AG04449 (cell line): ENCODE measurements at regions of chr21 and their contacts with region 1.

Region 1: DNA sequence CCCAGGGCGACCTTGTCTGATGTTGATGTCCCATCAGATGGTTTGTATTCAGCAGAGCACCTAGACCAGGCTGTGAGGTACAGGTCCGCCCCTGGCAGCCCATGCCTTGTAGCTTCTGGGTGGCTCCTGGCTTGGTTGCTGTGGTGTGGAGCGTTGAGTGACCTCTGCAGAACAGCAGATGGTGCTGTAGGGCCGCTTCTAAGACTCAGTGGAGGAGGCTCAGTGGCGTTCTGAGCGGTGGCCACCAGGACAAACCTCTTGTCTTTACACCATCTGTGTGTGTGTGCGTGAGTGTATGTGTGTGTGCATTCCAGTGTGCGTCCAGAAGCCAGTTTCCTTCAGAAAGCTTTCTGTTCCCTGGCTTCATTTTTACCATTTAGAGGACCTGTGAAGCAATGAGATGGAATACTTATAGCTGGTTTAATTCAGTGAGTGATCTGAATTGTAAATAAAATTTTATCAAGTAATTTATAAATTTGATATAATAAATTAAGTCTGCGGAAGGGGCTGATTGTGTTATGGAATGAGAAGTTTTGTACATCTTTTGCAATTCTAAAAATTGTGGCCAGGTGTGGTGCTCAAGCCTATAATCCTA is 66.1 kb downstream of the ADARB1 start:
- DNase-seq: peak; percentile 78
- H3K4me3 ChIP-seq: no peak overlapping the region
- CTCF ChIP-seq: peak; percentile 98

Region 2: DNA sequence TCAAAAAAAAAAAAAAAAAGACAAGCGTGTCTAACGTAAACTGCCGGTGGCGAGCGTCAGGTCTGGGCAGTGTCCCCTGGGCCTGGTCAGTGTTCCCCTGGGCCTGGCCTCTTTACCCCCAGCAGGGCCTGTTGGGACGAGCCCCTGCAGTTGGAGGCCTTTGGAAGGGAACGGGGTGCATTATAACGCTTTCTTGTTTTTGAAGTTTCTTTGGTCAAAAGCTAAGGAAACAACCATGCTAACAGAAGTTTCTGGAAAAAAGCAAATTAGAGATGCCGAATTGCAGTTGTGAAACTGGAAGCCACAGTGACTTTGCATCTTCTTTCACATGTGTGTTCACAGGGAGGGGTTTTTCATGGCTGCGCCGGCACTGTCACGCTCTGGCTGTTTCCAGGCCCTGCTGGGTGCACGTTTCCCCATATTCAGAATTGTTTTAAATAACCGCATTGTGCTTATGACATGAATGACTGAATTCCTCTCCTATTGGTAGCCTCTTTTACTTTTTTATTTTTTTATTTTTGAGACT is 1335.1 kb before region 1 on chr21:
- CTCF ChIA-PET with region 1: no interaction called
- POLR2A ChIA-PET with region 1: no interaction called
- DNase-seq: no peak
- H3K4me3 ChIP-seq: no peak overlapping the region
- CTCF ChIP-seq: no peak

Region 3: GRCh38 chr21:44686000-44686781 is 454.3 kb before region 1 on chr21:
- CTCF ChIA-PET with region 1: no interaction called
- POLR2A ChIA-PET with region 1: no interaction called
- DNase-seq: no peak
- H3K4me3 ChIP-seq: no peak overlapping the region
- CTCF ChIP-seq: no peak

Region 4: DNA sequence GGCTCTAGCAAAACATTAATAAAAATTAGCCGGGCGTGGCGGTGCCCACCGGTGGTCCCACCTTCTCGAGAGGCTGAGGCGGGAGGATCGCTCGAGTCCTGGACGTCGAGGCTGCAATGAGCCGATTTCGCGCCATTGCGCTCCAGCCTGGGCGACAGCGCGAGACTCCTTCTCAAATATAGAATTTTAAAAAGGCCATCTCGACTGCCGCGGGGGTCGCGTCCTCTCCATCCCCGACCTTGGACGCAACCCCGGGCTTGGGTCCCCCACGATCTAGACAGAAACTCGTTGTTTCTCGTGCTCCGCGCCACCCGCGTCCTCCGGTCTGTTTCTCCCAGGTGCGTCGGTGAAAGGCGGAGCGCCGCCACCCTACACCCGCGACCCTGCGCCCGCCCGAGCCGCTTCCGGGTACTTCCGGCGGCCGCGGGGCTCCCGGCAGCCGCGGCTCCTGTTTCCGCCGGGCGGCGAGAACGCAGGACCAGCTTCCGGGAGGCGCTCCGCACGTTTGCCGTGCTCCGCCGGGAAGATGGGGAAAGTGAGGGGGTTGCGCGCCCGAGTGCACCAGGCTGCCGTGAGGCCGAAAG is 200.8 kb before region 1 on chr21 and contains the start of gene SLX9:
- CTCF ChIA-PET with region 1: interaction called, 601 read pairs
- POLR2A ChIA-PET with region 1: no interaction called
- DNase-seq: no peak
- H3K4me3 ChIP-seq: peak within 1 kb of the TSS; percentile 91
- CTCF ChIP-seq: no peak

Region 5: DNA sequence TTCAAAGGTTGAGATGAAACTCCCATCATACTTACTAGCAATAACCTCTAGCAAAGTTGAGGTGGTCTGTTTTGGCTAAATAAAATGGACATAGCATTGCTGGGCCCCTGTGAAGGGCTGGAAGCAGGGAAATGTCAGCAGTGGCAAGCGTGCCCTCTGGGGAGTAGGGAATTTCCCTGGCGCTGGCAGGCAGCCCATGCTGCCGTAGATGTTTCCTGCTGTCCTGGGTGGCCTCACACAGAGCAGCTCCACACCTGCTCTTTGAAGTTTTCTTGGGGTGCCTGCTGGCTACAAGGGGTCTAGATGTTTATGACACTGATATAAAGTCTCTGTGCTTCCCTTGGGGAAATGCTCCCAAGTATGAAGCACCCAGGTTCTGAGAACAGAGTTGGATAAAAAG is 35.9 kb before region 1 on chr21:
- CTCF ChIA-PET with region 1: interaction called, 61 read pairs
- POLR2A ChIA-PET with region 1: no interaction called
- DNase-seq: no peak
- H3K4me3 ChIP-seq: no peak overlapping the region
- CTCF ChIP-seq: no peak

Region 6: GRCh38 chr21:45167796-45168222 is 27.4 kb after region 1 on chr21:
- CTCF ChIA-PET with region 1: interaction called, 88 read pairs
- POLR2A ChIA-PET with region 1: no interaction called
- DNase-seq: peak; percentile 29
- H3K4me3 ChIP-seq: no peak overlapping the region
- CTCF ChIP-seq: no peak

Region 7: DNA sequence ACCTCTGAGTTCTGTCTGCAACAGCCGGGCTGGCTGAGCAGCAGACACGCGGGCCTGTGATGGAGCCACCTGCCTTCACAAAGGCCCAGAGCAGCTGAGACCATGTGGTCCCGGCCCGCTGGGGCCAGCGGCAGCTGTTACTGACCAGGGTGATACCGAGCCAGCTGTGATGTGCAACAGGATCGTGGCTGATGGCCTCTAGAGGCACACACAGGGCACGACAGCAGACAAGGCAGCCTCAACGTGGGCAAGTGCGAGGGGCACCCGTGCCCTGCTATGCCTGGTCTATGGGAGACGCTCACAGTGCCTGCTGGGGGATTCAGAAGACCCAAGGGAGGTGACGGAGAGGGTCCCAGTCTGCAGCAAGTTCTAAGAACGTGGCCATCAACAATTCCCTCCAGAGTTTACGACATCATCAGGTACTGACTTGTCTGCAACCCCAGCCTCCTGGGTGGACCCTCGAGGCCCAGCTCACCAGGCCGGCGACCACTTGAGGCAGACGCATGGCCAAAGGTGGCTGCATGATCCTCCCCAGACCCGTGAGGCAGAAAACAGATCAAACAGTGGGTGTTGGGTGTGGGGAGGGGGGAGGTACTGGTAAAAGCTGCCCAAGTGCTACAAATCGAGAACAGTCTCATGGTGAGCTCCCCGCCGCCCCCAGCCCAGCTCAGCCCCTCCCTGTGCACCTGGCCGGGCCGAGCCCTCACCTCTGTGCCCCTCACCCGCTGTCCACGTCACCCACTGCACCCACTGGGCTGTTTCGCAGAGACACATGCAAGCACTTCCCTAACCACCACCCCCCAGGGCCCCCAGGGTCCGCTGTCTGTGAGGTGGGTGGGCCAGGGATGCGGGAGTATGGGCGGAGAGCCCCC is 141.2 kb after region 1 on chr21:
- CTCF ChIA-PET with region 1: interaction called, 304 read pairs
- POLR2A ChIA-PET with region 1: no interaction called
- DNase-seq: no peak
- H3K4me3 ChIP-seq: no peak overlapping the region
- CTCF ChIP-seq: no peak

Region 8: GRCh38 chr21:45439161-45439872 is 298.9 kb after region 1 on chr21:
- CTCF ChIA-PET with region 1: interaction called, 113 read pairs
- POLR2A ChIA-PET with region 1: no interaction called
- DNase-seq: peak; percentile 31
- H3K4me3 ChIP-seq: peak overlapping the region; percentile 21; the same call in 1 of the 2 replicates
- CTCF ChIP-seq: peak; percentile 94